ENCODE measurements at regions of chr20 and their contacts with region 1.

Region 1: DNA sequence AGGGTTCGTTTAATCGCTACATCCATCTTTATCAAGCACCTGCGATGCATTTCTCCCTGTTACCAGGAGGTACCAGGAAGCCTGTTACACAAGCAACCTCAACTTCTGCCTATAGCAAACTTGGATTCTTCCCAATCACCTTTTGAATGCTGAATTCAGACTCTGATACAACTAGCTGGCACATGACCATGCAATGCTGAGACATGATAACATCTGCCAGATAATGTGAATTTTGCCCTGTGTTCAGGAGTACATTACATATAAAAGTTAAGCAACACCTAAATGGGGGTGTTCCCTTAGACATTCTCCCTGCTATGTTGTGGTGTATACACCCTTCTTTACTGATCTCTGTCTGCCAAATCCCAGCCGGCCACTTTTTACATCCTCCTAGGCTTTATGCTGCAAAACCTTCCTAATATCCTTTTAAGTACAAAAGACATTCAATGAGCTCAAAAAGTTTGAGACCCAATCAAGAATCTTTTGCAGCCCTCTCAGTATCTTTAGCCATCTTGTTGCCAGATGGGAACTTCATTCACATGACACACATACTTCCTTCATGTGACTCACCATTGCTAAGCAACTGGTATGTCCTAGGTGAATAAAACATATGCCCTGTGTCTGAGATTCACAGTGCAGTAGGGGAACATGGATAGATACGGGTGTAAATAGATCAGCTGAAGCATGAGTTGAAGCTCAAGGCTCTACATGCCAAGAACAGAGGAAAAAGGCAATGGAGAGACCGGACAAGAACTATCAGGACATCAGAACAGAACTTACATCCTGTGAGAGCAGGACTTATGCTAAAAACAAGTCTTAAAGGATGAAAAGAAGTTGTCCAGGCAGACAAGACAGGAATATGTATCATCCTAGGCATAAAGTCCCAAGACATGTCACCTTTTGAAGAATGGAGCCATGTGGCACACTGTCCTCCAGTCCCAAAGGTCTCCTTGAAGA is 84.3 kb downstream of the ZHX3 start:
- DNase-seq: no peak

Region 2: GRCh38 chr20:41136680-41137613 is 96.3 kb before region 1 on chr20 and contains the start of gene PLCG1:
- intact Hi-C with region 1: loop called (anchors 2 kb)
- DNase-seq: peak; percentile 94
- total RNA-seq, gene PLCG1: 66.6 TPM

Region 3: GRCh38 chr20:41411391-41411847 is 178.2 kb after region 1 on chr20:
- intact Hi-C with region 1: loop called (anchors 5 kb)
- DNase-seq: no peak

Measured in cardiac septum (tissue), 1 donor.